Posterior cingulate gyrus (tissue), 11 donors: ENCODE measurements at regions of chr7 and their contacts with region 1.

Region 1: DNA sequence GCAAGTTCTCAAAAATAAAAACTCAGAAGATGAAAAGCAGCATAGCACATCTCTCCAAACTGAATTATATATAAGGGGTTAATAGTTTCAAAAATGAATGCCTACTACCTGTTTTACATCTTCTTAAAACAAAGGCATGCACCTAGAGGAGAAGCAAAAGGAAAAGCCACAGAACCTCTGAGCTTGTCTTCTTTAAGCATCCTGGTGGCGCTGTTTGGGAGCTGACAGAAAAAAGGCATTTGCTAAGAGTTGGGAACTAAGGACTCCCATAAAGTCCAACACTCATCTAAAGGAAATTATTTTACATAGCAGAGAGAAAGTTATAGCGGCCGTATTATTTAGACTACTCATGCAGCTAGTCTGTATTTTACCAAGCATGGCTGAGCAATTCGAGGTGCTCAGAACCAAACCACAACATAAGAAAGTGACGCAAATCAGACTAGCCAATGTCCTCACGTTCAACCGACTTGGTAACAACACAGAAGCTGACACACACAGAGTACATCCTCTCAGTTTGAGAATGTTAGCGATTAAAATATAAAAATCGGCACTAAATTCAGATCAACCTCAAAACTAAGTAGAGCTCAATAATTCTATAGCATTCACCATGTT is 38.8 kb downstream of the PTN start:
- DNase-seq: no peak

Region 2: GRCh38 chr7:137343281-137343841 is 38.6 kb after region 1 on chr7 and contains the start of gene PTN:
- intact Hi-C with region 1: loop called (anchors 5 kb)
- DNase-seq: peak; percentile 28 to 90 (median 50)